Tibial artery (tissue), 4 donors: ENCODE measurements at regions of chr19 and their contacts with region 1.

Region 1: GRCh38 chr19:52637718-52638585 is at the start of gene ZNF83:
- DNase-seq: peak; percentile 98 to 99
- H3K4me3 ChIP-seq: peak within 1 kb of the TSS; percentile 67 to 80
- H3K27ac ChIP-seq: peak within 1 kb of the TSS; percentile 85 to 93
- H3K4me1 ChIP-seq: peaks cover 0 to 21% (median 9%) of the 10 kb centered on the region in 4 donors
- H3K27me3 ChIP-seq: no peaks in the 10 kb centered on the region
- CTCF ChIP-seq: no peak

Region 2: GRCh38 chr19:52601025-52601973 is 36.7 kb before region 1 on chr19:
- intact Hi-C with region 1: loop called (anchors 5 kb)
- DNase-seq: peak; percentile 96 to 97
- H3K4me3 ChIP-seq: peak overlapping the region; percentile 59 to 64
- H3K27ac ChIP-seq: peak overlapping the region; percentile 77 to 87
- H3K4me1 ChIP-seq: peaks cover 0 to 32% (median 12%) of the 10 kb centered on the region in 4 donors
- H3K27me3 ChIP-seq: no peaks in the 10 kb centered on the region
- CTCF ChIP-seq: peak; percentile 26 to 36

Region 3: DNA sequence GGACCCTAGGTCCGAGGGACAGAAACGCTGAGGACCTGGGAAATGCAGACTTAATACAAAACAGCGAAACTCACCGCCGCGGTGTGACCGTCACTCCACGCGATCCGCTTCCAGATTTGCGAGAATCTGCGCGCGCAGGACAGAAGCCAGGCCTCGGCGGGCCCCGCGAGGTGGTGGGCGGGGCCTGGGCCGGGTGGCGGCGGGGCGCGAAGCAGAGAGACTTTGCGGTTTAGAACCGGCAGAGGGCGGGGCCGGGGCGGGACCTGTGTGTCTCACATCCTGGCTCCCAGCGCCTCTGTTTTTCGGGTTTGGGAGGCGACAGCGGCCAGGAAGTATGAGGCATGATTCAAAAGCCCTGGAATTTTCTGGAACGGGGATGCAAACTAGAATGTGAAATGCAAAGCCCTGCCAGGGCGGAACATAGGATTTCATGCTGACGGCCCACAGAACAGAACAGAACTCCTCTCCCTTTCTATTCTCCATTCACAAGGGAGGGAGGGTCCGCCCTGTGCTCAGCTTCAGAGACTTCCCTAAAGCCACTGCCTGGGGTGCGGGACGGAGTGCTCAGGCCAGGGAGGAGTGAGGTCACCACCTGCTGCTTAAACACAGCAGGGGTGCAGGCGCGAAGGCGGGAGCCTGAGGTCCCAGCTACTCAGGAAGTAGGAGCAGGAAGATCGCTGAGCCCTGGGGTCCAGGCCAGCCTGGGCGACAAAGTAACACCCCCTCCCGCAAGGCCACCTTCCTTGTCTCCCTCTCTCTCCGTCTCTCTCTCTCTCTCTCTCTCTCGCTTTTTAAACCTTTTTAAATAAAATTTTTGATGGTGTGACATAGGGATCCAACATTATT is 52.6 kb after region 1 on chr19:
- intact Hi-C with region 1: loop called (anchors 5 kb)
- DNase-seq: peak; percentile 96 to 97
- H3K4me3 ChIP-seq: peak overlapping the region; percentile 56
- H3K27ac ChIP-seq: peak overlapping the region; percentile 91 to 92
- H3K4me1 ChIP-seq: peaks cover 0 to 31% (median 16%) of the 10 kb centered on the region in 4 donors
- H3K27me3 ChIP-seq: no peaks in the 10 kb centered on the region
- CTCF ChIP-seq: peak; percentile 46 to 52